Right ventricle myocardium superior (tissue), 1 donor: ENCODE measurements at regions of chr1 and their contacts with region 1.

Region 1: DNA sequence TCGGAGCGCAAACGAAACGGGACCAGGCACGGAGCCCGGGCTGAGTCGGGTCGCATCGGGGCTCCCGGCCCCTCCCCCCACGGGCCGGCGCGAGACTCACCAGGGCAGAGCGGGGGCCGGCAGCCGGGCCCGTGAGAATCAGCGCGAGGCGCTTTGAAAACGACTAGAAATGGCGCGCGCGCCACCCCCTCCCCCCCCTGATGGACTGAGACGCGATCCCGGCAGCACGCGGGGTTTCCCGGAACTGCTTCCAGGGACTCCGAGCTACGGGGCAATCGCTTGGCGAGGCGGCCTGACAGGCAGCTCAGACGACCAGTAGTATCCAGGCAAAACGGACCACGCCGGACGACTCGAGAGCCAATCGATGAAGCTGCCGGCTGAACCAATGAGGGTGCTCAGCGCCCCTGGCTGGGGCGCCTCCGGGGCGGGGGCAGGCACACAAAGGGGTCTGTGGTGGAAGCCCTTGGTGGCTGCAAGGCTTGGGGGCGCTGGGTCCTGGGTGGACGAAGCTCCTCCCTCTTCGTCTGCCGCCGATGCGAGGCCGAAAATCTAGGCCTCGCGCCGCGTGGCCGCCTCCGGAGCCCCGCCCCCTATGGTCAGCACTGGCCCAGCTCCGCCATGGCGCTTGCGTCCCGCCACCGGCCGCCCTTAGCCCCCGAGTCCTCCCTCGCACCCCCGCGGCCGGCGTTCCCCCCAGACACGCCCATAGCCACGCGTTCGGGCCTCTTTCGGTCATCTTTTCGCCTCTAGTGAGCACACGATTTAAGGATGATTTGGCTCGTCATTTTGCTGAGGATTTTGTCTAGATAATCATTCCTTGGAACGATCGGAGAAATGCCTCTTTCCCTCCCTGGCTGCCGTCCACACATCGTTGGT is at the start of gene HNRNPR:
- DNase-seq: peak; percentile 100
- ATAC-seq: peak; percentile 97
- total RNA-seq, gene HNRNPR: 53.5 TPM

Region 2: GRCh38 chr1:23367791-23368561 is 23.6 kb after region 1 on chr1:
- intact Hi-C with region 1: loop called (anchors 2 kb)
- DNase-seq: peak; percentile 99
- ATAC-seq: peak; percentile 94